HCT116 (cell line): ENCODE measurements at regions of chr21 and their contacts with region 1.

Region 1: GRCh38 chr21:35217504-35218060 is 168.5 kb upstream of the RUNX1 start:
- DNase-seq: peak; percentile 98
- ATAC-seq: peak; percentile 97
- H3K4me3 ChIP-seq: peak overlapping the region in 1 of 2 experiments; percentile 5; a peak in 1 of 4 replicates
- H3K27ac ChIP-seq: peak overlapping the region; percentile 68; the same call in 1 of the 2 replicates
- H3K4me1 ChIP-seq: peaks cover 28 to 46% of the 10 kb centered on the region in 2 experiments
- H3K27me3 ChIP-seq: no peaks in the 10 kb centered on the region
- CTCF ChIP-seq: no peak
- POLR2A ChIP-seq: no peak
- RAD21 ChIP-seq: peak; percentile 35; the same call in 1 of the 2 replicates

Region 2: GRCh38 chr21:35204850-35205541 is 12.6 kb before region 1 on chr21:
- CTCF ChIA-PET with region 1: no interaction called
- POLR2A ChIA-PET with region 1: interaction called, 12 read pairs
- RAD21 ChIA-PET with region 1: no interaction called
- intact Hi-C with region 1: no loop called
- DNase-seq: no peak
- ATAC-seq: no peak
- H3K4me3 ChIP-seq: no peak overlapping the region
- H3K27ac ChIP-seq: no peak overlapping the region
- H3K4me1 ChIP-seq: peaks cover 3 to 42% of the 10 kb centered on the region in 2 experiments; a peak in 2 of 4 replicates
- H3K27me3 ChIP-seq: no peaks in the 10 kb centered on the region
- CTCF ChIP-seq: peak in 1 of 3 experiments; percentile 7; a peak in 1 of 6 replicates
- POLR2A ChIP-seq: no peak
- RAD21 ChIP-seq: peak; percentile 37; the same call in 1 of the 2 replicates

Region 3: GRCh38 chr21:35232545-35233176 is 15.1 kb after region 1 on chr21:
- CTCF ChIA-PET with region 1: no interaction called
- POLR2A ChIA-PET with region 1: interaction called, 13 read pairs
- RAD21 ChIA-PET with region 1: no interaction called
- intact Hi-C with region 1: no loop called
- DNase-seq: peak; percentile 88
- ATAC-seq: peak; percentile 94
- H3K4me3 ChIP-seq: peak overlapping the region in 1 of 2 experiments; percentile 7; a peak in 1 of 4 replicates
- H3K27ac ChIP-seq: peak overlapping the region; percentile 51; the same call in 1 of the 2 replicates
- H3K4me1 ChIP-seq: peaks cover 28 to 35% of the 10 kb centered on the region in 2 experiments
- H3K27me3 ChIP-seq: no peaks in the 10 kb centered on the region
- CTCF ChIP-seq: no peak
- POLR2A ChIP-seq: no peak
- RAD21 ChIP-seq: peak; percentile 22; the same call in 1 of the 2 replicates

Region 4: GRCh38 chr21:35256467-35256988 is 38.9 kb after region 1 on chr21:
- CTCF ChIA-PET with region 1: no interaction called
- POLR2A ChIA-PET with region 1: interaction called, 3 read pairs
- RAD21 ChIA-PET with region 1: no interaction called
- intact Hi-C with region 1: loop called (anchors 1 kb)
- DNase-seq: peak; percentile 89
- ATAC-seq: peak; percentile 96
- H3K4me3 ChIP-seq: peak overlapping the region; percentile 38 to 56
- H3K27ac ChIP-seq: peak overlapping the region; percentile 63
- H3K4me1 ChIP-seq: peaks cover 16 to 32% of the 10 kb centered on the region in 2 experiments
- H3K27me3 ChIP-seq: no peaks in the 10 kb centered on the region
- CTCF ChIP-seq: no peak
- POLR2A ChIP-seq: no peak
- RAD21 ChIP-seq: peak; percentile 37; the same call in 1 of the 2 replicates